Naive thymus-derived CD4-positive, alpha-beta T cell (primary cell): ENCODE measurements at regions of chr9 and their contacts with region 1.

Region 1: DNA sequence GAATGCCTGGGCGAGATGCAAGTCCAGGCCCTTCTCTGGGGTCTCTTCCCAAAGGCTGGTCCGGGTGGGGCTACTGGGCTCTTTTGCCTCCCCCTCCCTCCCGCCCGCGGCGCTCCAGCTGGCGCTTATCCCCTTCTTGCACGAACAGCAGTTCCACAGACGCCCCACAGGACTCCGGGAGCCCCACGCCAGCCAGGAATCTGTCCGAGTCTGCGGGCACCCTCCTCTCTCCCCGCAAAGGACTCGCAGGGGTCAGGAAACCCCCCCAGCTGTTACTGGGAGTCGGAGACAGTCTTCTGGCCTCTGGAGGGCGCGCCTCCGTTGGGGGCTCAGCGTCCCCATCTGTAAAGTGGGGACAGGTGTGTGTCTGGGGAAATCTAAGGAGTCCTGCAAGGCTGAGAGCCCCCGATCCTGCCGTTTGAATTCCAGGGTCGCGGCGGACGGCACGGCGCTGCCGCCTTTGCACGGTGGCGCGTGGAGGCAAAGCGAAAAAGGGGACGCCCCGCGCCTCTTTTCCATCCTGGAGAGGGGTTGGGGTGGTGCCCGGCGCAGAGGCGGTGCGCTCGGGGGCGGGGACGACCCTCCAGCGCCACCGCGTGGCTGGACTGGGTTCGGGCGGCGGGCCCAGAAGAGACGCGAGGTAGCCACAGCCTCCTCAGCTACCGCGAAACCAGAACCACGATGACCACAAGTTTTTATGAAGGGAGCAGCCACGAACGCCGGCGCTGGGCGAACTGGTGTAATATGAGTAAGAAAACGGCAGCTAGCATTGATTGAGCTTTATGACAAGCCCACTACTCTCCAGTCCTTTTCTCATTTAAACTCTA is 2.9 kb upstream of the CCIN start:
- DNase-seq: peak; percentile 57 to 92 (median 76)
- ATAC-seq: peak; percentile 99
- H3K4me3 ChIP-seq: peak overlapping the region; percentile 64
- H3K4me3 Mint-ChIP-seq: peak overlapping the region; percentile 60 to 78 (median 70)
- H3K27ac ChIP-seq: no peak overlapping the region
- H3K27ac Mint-ChIP-seq: peak overlapping the region; percentile 47 to 85 (median 56)
- H3K4me1 ChIP-seq: peaks cover 0 to 3% of the 10 kb centered on the region in 2 donors
- H3K4me1 Mint-ChIP-seq: peaks cover 2 to 17% (median 6%) of the 10 kb centered on the region in 7 donors
- H3K27me3 ChIP-seq: no peaks in the 10 kb centered on the region
- H3K27me3 Mint-ChIP-seq: peaks cover 0 to 14% (median 0%) of the 10 kb centered on the region in 5 donors

Region 2: DNA sequence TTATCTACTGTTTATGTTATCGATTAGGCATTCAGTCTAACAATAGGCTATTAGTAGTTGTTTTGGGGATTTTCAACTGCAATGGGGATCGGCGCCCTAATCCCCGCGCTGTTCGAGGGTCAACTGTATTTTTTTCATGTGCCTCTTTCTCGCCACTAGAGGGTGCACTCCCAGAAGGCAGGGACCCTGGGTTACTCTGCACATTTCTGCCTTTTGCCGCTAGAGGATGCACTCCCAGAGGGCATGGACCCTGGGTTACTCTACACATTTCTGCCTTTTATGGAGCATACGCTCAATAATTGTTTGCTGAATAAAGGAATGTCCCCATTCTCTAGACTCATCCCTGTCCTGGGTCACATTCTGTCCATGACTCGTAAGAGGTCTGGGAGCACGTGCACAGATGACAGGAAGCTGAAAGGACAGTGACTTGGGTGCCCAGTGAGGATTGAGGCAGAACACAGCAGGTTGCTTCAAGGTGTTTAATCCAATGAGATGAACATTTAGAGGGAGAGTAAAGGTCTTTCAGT is 157.5 kb before region 1 on chr9:
- CTCF ChIA-PET with region 1: no interaction called
- POLR2A ChIA-PET with region 1: no interaction called
- intact Hi-C with region 1: loop called (anchors 1 to 2 kb)
- DNase-seq: peak; percentile 4 to 73 (median 61)
- ATAC-seq: peak; percentile 98
- H3K4me3 ChIP-seq: no peak overlapping the region
- H3K4me3 Mint-ChIP-seq: peak overlapping the region in 3 of 10 donors; percentile 20 to 26 (median 23)
- H3K27ac ChIP-seq: no peak overlapping the region
- H3K27ac Mint-ChIP-seq: peak overlapping the region in 1 of 9 donors; percentile 36
- H3K4me1 ChIP-seq: peaks cover 0 to 5% of the 10 kb centered on the region in 2 donors
- H3K4me1 Mint-ChIP-seq: peaks cover 10 to 25% (median 20%) of the 10 kb centered on the region in 7 donors
- H3K27me3 ChIP-seq: no peaks in the 10 kb centered on the region
- H3K27me3 Mint-ChIP-seq: peaks cover 4 to 47% (median 20%) of the 10 kb centered on the region in 5 donors

Region 3: GRCh38 chr9:36102742-36103495 is 63.4 kb before region 1 on chr9:
- CTCF ChIA-PET with region 1: interaction called, 270 read pairs
- POLR2A ChIA-PET with region 1: interaction called, 6 read pairs
- intact Hi-C with region 1: loop called (anchors 1 kb)
- DNase-seq: peak; percentile 70 to 87 (median 82)
- ATAC-seq: peak; percentile 100
- H3K4me3 ChIP-seq: no peak overlapping the region
- H3K4me3 Mint-ChIP-seq: no peak overlapping the region
- H3K27ac ChIP-seq: no peak overlapping the region
- H3K27ac Mint-ChIP-seq: peak overlapping the region in 4 of 9 donors; percentile 12 to 76 (median 61)
- H3K4me1 ChIP-seq: peaks cover 0 to 5% of the 10 kb centered on the region in 2 donors
- H3K4me1 Mint-ChIP-seq: peaks cover 5 to 8% (median 8%) of the 10 kb centered on the region in 7 donors
- H3K27me3 ChIP-seq: no peaks in the 10 kb centered on the region
- H3K27me3 Mint-ChIP-seq: no peaks in the 10 kb centered on the region

Region 4: DNA sequence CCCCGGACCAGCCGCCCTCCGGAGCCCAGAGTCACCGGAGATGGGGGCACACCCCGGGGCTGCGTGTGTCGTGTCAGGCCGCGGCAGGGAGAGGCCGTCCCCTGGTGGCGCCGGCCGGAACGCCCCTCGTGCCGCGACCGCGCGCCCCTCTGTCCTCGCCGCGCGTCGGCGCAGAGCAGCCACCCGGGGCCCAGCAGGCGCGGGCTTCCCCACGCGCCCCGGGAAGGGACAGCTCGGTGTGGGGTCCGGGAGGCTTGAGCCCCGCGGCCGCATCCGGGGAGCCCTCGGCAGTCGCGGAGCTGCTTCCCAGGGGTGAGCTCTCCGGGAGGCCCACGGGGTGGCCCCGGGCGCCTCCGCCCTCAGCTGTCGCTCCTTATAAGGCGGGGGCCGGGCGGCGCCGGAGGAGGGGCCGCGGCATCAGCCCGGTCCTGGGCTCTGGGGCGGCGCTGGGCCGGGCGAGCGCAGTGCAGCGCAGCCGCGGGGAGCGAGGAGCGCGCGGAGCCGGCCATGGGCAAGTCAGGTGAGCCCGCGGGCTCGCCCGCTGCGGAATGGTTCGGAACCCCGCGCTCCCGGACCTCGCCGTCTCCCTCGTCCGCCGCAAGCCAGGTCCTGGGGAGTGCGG is 29.9 kb before region 1 on chr9 and contains the start of gene GLIPR2:
- CTCF ChIA-PET with region 1: interaction called, 7 read pairs
- POLR2A ChIA-PET with region 1: interaction called, 3 read pairs
- intact Hi-C with region 1: loop called (anchors 1 kb)
- DNase-seq: peak; percentile 60 to 88 (median 69)
- ATAC-seq: peak; percentile 97
- H3K4me3 ChIP-seq: peak within 1 kb of the TSS; percentile 78
- H3K4me3 Mint-ChIP-seq: peak within 1 kb of the TSS; percentile 83 to 99 (median 93)
- H3K27ac ChIP-seq: peak within 1 kb of the TSS; percentile 74
- H3K27ac Mint-ChIP-seq: peak within 1 kb of the TSS; percentile 25 to 94 (median 87)
- H3K4me1 ChIP-seq: peaks cover 43 to 49% of the 10 kb centered on the region in 2 donors
- H3K4me1 Mint-ChIP-seq: peaks cover 43 to 52% (median 49%) of the 10 kb centered on the region in 7 donors
- H3K27me3 ChIP-seq: no peaks in the 10 kb centered on the region
- H3K27me3 Mint-ChIP-seq: peaks cover 0 to 39% (median 0%) of the 10 kb centered on the region in 5 donors
- total RNA-seq, gene GLIPR2: 7.7 to 74.7 (median 18.6) TPM